Panc1 (cell line): ENCODE measurements at regions of chr1 and their contacts with region 1.

Region 1: GRCh38 chr1:111242805-111243523 is 15.5 kb downstream of the CHI3L2 start:
- DNase-seq: no peak
- ATAC-seq: no peak
- H3K4me3 ChIP-seq: no peak overlapping the region
- H3K27ac ChIP-seq: 0 out of 2 replicates have a peak overlapping the region, but pooled peaks have one; percentile 29
- H3K4me1 ChIP-seq: no peaks in the 10 kb centered on the region
- H3K27me3 ChIP-seq: no peaks in the 10 kb centered on the region
- CTCF ChIP-seq: no peak

Region 2: DNA sequence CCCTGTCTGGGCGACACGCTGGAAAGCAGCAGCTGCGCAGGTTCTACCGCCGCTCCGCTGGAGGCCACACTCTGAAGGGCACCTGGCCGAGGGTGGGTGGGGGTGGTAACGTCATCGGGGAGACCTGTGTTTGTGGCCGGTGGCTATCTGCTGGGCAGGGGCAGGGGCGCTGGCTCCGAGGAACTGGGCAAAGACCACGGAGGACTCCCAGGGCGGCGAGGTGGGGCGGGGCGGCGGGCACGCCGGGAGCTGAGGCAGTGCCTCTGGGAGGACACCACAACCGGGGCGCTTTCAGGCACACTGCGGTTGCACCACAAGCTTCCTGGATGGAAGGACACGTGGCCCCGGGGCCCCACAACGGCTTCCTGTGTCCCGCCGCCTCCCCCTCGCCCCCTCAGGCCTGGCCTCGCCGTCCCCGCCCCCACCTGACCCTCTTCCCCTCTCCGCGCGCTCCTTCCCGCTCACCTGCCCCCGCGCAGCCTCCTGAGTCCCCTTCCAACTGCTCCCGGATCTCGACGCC is 39.2 kb before region 1 on chr1:
- CTCF ChIA-PET with region 1: no interaction called
- POLR2A ChIA-PET with region 1: no interaction called
- in situ Hi-C with region 1: no loop called
- intact Hi-C with region 1: no loop called
- DNase-seq: no peak
- ATAC-seq: peak; percentile 80
- H3K4me3 ChIP-seq: peak overlapping the region; percentile 50 to 57
- H3K27ac ChIP-seq: no peak overlapping the region
- H3K4me1 ChIP-seq: no peaks in the 10 kb centered on the region
- H3K27me3 ChIP-seq: peaks cover 2% of the 10 kb centered on the region; the same call in 1 of the 2 replicates
- CTCF ChIP-seq: no peak

Region 3: GRCh38 chr1:111269825-111270406 is 27.0 kb after region 1 on chr1:
- CTCF ChIA-PET with region 1: no interaction called
- POLR2A ChIA-PET with region 1: no interaction called
- in situ Hi-C with region 1: no loop called
- intact Hi-C with region 1: no loop called
- DNase-seq: no peak
- ATAC-seq: no peak
- H3K4me3 ChIP-seq: no peak overlapping the region
- H3K27ac ChIP-seq: no peak overlapping the region
- H3K4me1 ChIP-seq: no peaks in the 10 kb centered on the region
- H3K27me3 ChIP-seq: no peaks in the 10 kb centered on the region
- CTCF ChIP-seq: no peak

Region 4: GRCh38 chr1:111318523-111318922 is 75.6 kb after region 1 on chr1:
- CTCF ChIA-PET with region 1: no interaction called
- POLR2A ChIA-PET with region 1: no interaction called
- in situ Hi-C with region 1: loop called (anchors 10 kb)
- intact Hi-C with region 1: no loop called
- DNase-seq: no peak
- ATAC-seq: no peak
- H3K4me3 ChIP-seq: no peak overlapping the region
- H3K27ac ChIP-seq: no peak overlapping the region
- H3K4me1 ChIP-seq: no peaks in the 10 kb centered on the region
- H3K27me3 ChIP-seq: no peaks in the 10 kb centered on the region
- CTCF ChIP-seq: no peak

Region 5: DNA sequence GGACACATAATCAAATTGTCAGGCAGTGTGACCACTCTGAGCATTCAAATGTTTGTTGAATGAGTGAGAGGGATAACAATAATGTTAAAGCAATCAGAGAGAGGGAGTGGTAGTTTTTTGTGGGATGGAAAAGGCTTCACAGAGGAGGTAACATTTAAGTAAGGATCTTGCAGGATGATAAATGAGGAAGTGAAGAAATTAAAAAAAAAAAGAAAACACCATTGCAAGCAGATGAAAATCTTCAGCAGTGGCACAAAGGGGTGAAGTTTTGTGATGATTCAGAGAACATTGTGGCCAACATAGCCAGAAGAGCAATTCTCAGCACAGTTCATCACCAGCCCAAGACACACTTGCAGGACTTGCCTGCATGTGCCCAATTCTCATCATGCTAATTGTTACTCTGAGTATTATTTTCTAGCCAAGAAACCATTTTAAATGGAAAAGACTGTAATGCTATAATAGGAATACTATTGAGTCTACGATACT is 149.5 kb after region 1 on chr1:
- CTCF ChIA-PET with region 1: no interaction called
- POLR2A ChIA-PET with region 1: no interaction called
- in situ Hi-C with region 1: no loop called
- intact Hi-C with region 1: no loop called
- DNase-seq: no peak
- ATAC-seq: no peak
- H3K4me3 ChIP-seq: no peak overlapping the region
- H3K27ac ChIP-seq: no peak overlapping the region
- H3K4me1 ChIP-seq: no peaks in the 10 kb centered on the region
- H3K27me3 ChIP-seq: no peaks in the 10 kb centered on the region
- CTCF ChIP-seq: no peak